HCT116 (cell line): ENCODE measurements at regions of chr5 and their contacts with region 1.

Region 1: GRCh38 chr5:134648425-134649162 is at the start of gene SEC24A:
- DNase-seq: peak; percentile 57
- ATAC-seq: peak; percentile 92
- H3K4me3 ChIP-seq: peak within 1 kb of the TSS; percentile 98 to 100
- H3K27ac ChIP-seq: peak within 1 kb of the TSS; percentile 75
- H3K4me1 ChIP-seq: peaks cover 9 to 19% of the 10 kb centered on the region in 2 experiments; a peak in 3 of 4 replicates
- H3K27me3 ChIP-seq: no peaks in the 10 kb centered on the region
- CTCF ChIP-seq: no peak
- POLR2A ChIP-seq: peak; percentile 74
- RAD21 ChIP-seq: no peak
- total RNA-seq, gene SEC24A: 16.8 TPM

Region 2: DNA sequence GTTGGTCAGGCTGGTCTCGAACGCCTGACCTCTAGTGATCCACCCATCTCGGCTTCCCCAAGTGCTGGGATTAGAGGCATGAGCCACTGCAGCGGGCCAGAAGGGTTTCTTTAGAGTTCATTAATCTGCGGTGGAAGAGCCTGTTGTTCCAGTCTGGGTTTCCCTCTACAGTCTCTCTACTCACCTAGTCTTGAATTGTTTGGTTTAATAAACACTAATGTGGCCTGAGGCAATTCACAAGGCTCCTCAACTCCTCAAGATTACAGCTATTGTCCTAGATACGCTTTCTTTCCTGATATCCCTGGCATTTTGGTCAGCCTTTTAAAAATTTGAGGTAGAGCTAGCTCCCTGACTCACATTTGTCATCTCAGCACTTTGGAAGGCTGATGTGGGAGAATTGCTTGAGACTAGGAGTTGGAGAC is 11.4 kb before region 1 on chr5:
- CTCF ChIA-PET with region 1: no interaction called
- POLR2A ChIA-PET with region 1: interaction called, 4 read pairs
- RAD21 ChIA-PET with region 1: no interaction called
- intact Hi-C with region 1: loop called (anchors 1 kb)
- DNase-seq: no peak
- ATAC-seq: no peak
- H3K4me3 ChIP-seq: no peak overlapping the region
- H3K27ac ChIP-seq: no peak overlapping the region
- H3K4me1 ChIP-seq: peaks cover 0 to 4% of the 10 kb centered on the region in 2 experiments; a peak in 1 of 4 replicates
- H3K27me3 ChIP-seq: no peaks in the 10 kb centered on the region
- CTCF ChIP-seq: no peak
- POLR2A ChIP-seq: no peak
- RAD21 ChIP-seq: no peak